ENCODE measurements at regions of chr1 and their contacts with region 1.

Region 1: GRCh38 chr1:185238447-185238846 is 78.6 kb downstream of the IVNS1ABP start:
- DNase-seq: peak; percentile 4
- H3K4me3 ChIP-seq: no peak overlapping the region
- H3K27ac ChIP-seq: no peak overlapping the region
- H3K4me1 ChIP-seq: no peaks in the 10 kb centered on the region
- CTCF ChIP-seq: peak; percentile 55

Region 2: DNA sequence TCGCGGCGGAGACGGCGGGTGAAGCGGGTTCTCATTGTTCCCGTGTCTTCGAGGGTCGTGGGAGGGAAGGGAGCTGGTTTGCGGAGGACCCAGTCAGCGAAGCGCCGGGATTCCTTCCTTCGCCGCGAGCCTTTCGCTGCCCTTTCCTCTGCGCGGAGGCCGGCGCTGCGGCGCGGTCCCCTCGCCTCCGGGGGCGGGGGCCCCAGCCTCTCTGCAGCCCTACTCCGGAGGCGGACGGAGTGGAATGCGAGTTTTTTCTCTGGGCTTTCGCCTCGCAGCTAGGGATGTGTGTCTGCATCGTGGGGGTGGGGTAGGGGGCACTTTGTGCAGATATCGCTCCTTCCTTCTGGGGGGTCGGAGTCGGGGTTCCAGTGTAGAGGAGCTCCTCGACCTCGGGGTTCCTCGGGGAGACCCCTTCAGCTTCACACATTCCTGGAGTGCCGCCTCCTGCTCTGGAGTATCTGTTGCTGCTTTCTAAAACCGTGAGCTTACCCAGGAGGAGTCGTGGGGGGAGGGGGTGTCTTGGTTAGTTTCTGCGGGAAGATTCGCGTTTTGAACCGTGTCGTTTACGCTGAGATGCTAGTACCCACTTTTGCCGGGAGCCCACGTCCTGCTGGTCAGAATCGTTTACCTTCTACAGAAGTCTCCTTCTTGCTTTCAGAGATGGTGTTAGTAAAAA is 192.5 kb before region 1 on chr1:
- CTCF ChIA-PET with region 1: no interaction called
- POLR2A ChIA-PET with region 1: no interaction called
- intact Hi-C with region 1: no loop called
- DNase-seq: peak; percentile 48
- H3K4me3 ChIP-seq: peak overlapping the region; percentile 87
- H3K27ac ChIP-seq: no peak overlapping the region
- H3K4me1 ChIP-seq: peaks cover 11% of the 10 kb centered on the region
- CTCF ChIP-seq: no peak

Region 3: GRCh38 chr1:185091480-185091879 is 147.0 kb before region 1 on chr1:
- CTCF ChIA-PET with region 1: no interaction called
- POLR2A ChIA-PET with region 1: no interaction called
- intact Hi-C with region 1: no loop called
- DNase-seq: no peak
- H3K4me3 ChIP-seq: no peak overlapping the region
- H3K27ac ChIP-seq: no peak overlapping the region
- H3K4me1 ChIP-seq: no peaks in the 10 kb centered on the region
- CTCF ChIP-seq: no peak

Region 4: GRCh38 chr1:185170291-185170848 is 68.1 kb before region 1 on chr1:
- CTCF ChIA-PET with region 1: no interaction called
- POLR2A ChIA-PET with region 1: no interaction called
- intact Hi-C with region 1: no loop called
- DNase-seq: peak; percentile 77
- H3K4me3 ChIP-seq: no peak overlapping the region
- H3K27ac ChIP-seq: no peak overlapping the region
- H3K4me1 ChIP-seq: no peaks in the 10 kb centered on the region
- CTCF ChIP-seq: peak; percentile 100

Region 5: GRCh38 chr1:185681034-185681633 is 442.7 kb after region 1 on chr1:
- CTCF ChIA-PET with region 1: no interaction called
- POLR2A ChIA-PET with region 1: no interaction called
- intact Hi-C with region 1: loop called (anchors 5 kb)
- DNase-seq: peak; percentile 36
- H3K4me3 ChIP-seq: no peak overlapping the region
- H3K27ac ChIP-seq: no peak overlapping the region
- H3K4me1 ChIP-seq: no peaks in the 10 kb centered on the region
- CTCF ChIP-seq: peak; percentile 71

Measured in OCI-LY7 (cell line).